ENCODE measurements at regions of chr17 and their contacts with region 1.

Region 1: GRCh38 chr17:74478420-74479100 is 12.1 kb downstream of the CD300A start:
- DNase-seq: peak; percentile 64
- ATAC-seq: peak; percentile 90
- H3K4me3 Mint-ChIP-seq: peak overlapping the region; percentile 22
- H3K27ac Mint-ChIP-seq: peak overlapping the region; percentile 65
- H3K4me1 Mint-ChIP-seq: peaks cover 43% of the 10 kb centered on the region
- H3K27me3 Mint-ChIP-seq: no peaks in the 10 kb centered on the region

Region 2: GRCh38 chr17:74464730-74465377 is 13.7 kb before region 1 on chr17:
- CTCF ChIA-PET with region 1: interaction called, 3 read pairs
- POLR2A ChIA-PET with region 1: no interaction called
- intact Hi-C with region 1: loop called in 1 of 2 experiments (anchors 2 kb)
- DNase-seq: no peak
- ATAC-seq: no peak
- H3K4me3 Mint-ChIP-seq: no peak overlapping the region
- H3K27ac Mint-ChIP-seq: no peak overlapping the region
- H3K4me1 Mint-ChIP-seq: peaks cover 20% of the 10 kb centered on the region
- H3K27me3 Mint-ChIP-seq: no peaks in the 10 kb centered on the region

Region 3: GRCh38 chr17:74552037-74552436 is 73.5 kb after region 1 on chr17:
- CTCF ChIA-PET with region 1: no interaction called
- POLR2A ChIA-PET with region 1: no interaction called
- intact Hi-C with region 1: no loop called
- DNase-seq: no peak
- ATAC-seq: no peak
- H3K4me3 Mint-ChIP-seq: no peak overlapping the region
- H3K27ac Mint-ChIP-seq: no peak overlapping the region
- H3K4me1 Mint-ChIP-seq: peaks cover 9% of the 10 kb centered on the region
- H3K27me3 Mint-ChIP-seq: no peaks in the 10 kb centered on the region

Region 4: DNA sequence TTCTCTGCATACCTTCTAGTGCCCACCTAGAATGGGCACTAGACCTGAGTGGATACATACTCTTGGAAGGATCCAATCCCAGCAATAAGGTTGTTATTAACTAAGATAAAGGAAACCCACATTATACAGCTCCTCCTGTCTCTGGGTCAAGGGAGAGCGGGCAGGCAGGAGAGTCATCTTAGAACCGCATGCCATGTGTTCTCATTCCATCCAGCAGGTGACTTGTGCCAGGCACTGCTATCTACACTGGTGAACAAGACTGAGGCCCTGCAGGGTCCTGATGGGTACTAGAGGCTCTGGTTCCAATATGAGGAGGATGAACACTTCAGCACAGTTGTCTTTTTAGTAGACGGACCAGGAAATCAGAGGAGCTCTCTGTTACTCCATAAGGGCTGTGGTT is 94.6 kb after region 1 on chr17:
- CTCF ChIA-PET with region 1: no interaction called
- POLR2A ChIA-PET with region 1: no interaction called
- intact Hi-C with region 1: no loop called
- DNase-seq: no peak
- ATAC-seq: no peak
- H3K4me3 Mint-ChIP-seq: no peak overlapping the region
- H3K27ac Mint-ChIP-seq: no peak overlapping the region
- H3K4me1 Mint-ChIP-seq: peaks cover 24% of the 10 kb centered on the region
- H3K27me3 Mint-ChIP-seq: peaks cover 10% of the 10 kb centered on the region